Mammary epithelial cell (primary cell): ENCODE measurements at regions of chr6 and their contacts with region 1.

Region 1: GRCh38 chr6:99467509-99468106 is 42.5 kb upstream of the PNISR start:
- DNase-seq: no peak
- H3K4me3 ChIP-seq: no peak overlapping the region
- H3K27ac ChIP-seq: no peak overlapping the region
- H3K4me1 ChIP-seq: no peaks in the 10 kb centered on the region
- H3K27me3 ChIP-seq: no peaks in the 10 kb centered on the region
- CTCF ChIP-seq: peak; percentile 51 to 69

Region 2: DNA sequence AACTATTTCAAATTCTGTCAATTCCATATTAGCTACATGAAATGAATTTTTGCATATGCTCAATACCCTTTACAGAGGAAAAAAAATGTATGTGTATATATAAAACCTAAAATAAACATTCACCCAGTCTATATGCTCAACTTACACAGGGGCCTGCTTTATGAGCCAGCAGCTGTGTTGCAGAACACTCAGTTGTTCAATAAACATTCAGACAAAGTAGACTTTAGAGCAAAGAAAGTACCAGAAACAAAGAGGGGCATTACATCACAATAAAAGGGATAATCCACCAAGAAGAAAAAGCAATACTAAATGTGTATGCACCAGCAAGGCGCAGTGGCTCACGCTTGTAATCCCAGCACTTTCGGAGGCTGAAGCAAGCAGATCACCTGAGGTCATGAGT is 83.1 kb before region 1 on chr6:
- CTCF ChIA-PET with region 1: no interaction called
- dilution Hi-C with region 1: no loop called
- in situ Hi-C with region 1: no loop called
- intact Hi-C with region 1: no loop called
- DNase-seq: no peak
- H3K4me3 ChIP-seq: no peak overlapping the region
- H3K27ac ChIP-seq: no peak overlapping the region
- H3K4me1 ChIP-seq: no peaks in the 10 kb centered on the region
- H3K27me3 ChIP-seq: no peaks in the 10 kb centered on the region
- CTCF ChIP-seq: no peak

Region 3: GRCh38 chr6:99568103-99568933 is 100.7 kb after region 1 on chr6 and contains the start of gene CCNC:
- CTCF ChIA-PET with region 1: no interaction called
- dilution Hi-C with region 1: no loop called
- in situ Hi-C with region 1: no loop called
- intact Hi-C with region 1: loop called (anchors 10 kb)
- DNase-seq: peak; percentile 95
- H3K4me3 ChIP-seq: peak within 1 kb of the TSS; percentile 73 to 92 (median 80)
- H3K27ac ChIP-seq: peak within 1 kb of the TSS; percentile 88
- H3K4me1 ChIP-seq: peaks cover 4% of the 10 kb centered on the region
- H3K27me3 ChIP-seq: no peaks in the 10 kb centered on the region
- CTCF ChIP-seq: no peak
- total RNA-seq, gene CCNC: 79.3 to 130 TPM

Region 4: DNA sequence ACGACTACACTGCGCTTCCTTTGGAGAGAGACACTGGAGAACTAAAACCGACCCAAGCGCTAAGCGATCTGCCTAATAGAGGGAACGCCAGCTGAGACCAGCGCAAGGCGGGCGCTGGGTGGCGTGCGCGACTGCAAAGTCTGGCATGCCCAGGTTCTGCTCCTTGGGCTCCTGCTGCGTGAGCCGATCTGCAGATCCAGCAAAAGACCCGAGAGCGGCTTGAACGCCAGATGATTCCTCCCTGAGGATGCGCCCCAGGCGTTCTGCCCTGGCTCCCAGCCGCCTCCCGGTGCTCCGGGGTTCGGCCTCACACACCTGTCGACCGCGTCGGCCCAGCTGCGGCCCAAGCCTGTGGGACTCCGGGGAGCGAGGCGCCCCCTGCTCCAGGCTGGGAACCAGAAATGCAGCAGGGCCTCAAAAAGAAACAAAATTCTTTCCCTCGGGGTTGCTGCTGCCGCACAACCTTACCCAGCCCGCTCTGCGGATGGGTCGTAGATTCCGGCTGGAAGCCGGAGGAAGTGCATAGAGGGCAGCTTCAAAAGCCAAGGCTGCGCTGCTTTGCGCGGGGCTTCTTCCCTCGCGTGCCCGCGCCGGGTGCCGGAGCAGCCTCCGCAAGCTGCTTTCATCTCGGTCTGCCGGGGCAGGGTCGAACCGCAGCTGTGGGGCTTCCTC is 121.1 kb after region 1 on chr6:
- CTCF ChIA-PET with region 1: no interaction called
- dilution Hi-C with region 1: no loop called
- in situ Hi-C with region 1: no loop called
- intact Hi-C with region 1: no loop called
- DNase-seq: peak; percentile 73
- H3K4me3 ChIP-seq: peak overlapping the region; percentile 51 to 65 (median 60)
- H3K27ac ChIP-seq: no peak overlapping the region
- H3K4me1 ChIP-seq: peaks cover 10% of the 10 kb centered on the region
- H3K27me3 ChIP-seq: peaks cover 32% of the 10 kb centered on the region
- CTCF ChIP-seq: peak; percentile 46 to 79

Region 5: DNA sequence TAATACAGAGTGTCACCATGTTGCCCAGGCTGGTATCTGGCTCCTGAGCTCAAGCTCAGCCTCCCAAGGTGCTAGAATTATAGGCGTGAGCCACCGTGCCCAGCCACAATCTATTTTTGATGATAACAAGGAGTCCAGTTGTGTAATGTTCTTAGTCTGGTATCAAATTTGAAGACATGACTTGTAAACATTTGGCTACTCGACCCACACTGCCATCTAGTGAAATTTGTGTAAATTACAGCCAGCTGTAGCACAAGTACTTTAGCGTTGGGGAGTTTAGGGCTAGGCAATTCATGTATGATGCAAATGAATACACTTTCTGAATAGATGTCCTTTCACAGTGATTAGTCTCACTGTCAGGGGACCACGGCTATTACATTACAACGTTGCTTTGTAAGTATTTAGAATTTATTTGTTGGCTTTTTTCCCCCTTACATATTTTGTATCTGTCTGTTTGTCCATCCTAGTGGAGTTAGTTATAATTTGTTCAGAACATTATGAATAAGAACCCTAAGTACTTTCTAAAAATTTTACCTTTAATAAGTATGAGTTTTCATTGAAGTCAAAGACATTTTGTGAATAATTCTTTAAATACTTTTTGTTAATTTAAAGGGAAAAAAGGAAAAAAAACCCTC is 278.8 kb after region 1 on chr6:
- CTCF ChIA-PET with region 1: no interaction called
- dilution Hi-C with region 1: no loop called
- in situ Hi-C with region 1: loop called in 1 of 2 experiments (anchors 25 kb)
- intact Hi-C with region 1: loop called (anchors 1 kb)
- DNase-seq: peak; percentile 61
- H3K4me3 ChIP-seq: no peak overlapping the region
- H3K27ac ChIP-seq: no peak overlapping the region
- H3K4me1 ChIP-seq: peaks cover 13% of the 10 kb centered on the region
- H3K27me3 ChIP-seq: peaks cover 2% of the 10 kb centered on the region
- CTCF ChIP-seq: peak; percentile 85 to 90

Region 6: GRCh38 chr6:99822741-99823512 is 355.3 kb after region 1 on chr6:
- CTCF ChIA-PET with region 1: no interaction called
- dilution Hi-C with region 1: no loop called
- in situ Hi-C with region 1: loop called (anchors 25 kb)
- intact Hi-C with region 1: loop called (anchors 5 kb)
- DNase-seq: peak; percentile 69
- H3K4me3 ChIP-seq: peak overlapping the region in 2 of 3 experiments; percentile 17 to 30
- H3K27ac ChIP-seq: no peak overlapping the region
- H3K4me1 ChIP-seq: peaks cover 9% of the 10 kb centered on the region
- H3K27me3 ChIP-seq: no peaks in the 10 kb centered on the region
- CTCF ChIP-seq: peak; percentile 66 to 75